Natural killer cell (primary cell): ENCODE measurements at regions of chr2 and their contacts with region 1.

Region 1: GRCh38 chr2:198322294-198322693 is 517.9 kb downstream of the PLCL1 start:
- DNase-seq: peak in 1 of 2 donors; percentile 8
- ATAC-seq: no peak
- H3K4me3 ChIP-seq: no peak overlapping the region
- H3K4me3 Mint-ChIP-seq: no peak overlapping the region
- H3K27ac ChIP-seq: no peak overlapping the region
- H3K27ac Mint-ChIP-seq: no peak overlapping the region
- H3K4me1 ChIP-seq: no peaks in the 10 kb centered on the region
- H3K4me1 Mint-ChIP-seq: peaks cover 8 to 17% of the 10 kb centered on the region in 2 donors
- H3K27me3 ChIP-seq: peaks cover 17% of the 10 kb centered on the region
- H3K27me3 Mint-ChIP-seq: peaks cover 18 to 33% of the 10 kb centered on the region in 2 donors
- CTCF ChIP-seq: no peak

Region 2: DNA sequence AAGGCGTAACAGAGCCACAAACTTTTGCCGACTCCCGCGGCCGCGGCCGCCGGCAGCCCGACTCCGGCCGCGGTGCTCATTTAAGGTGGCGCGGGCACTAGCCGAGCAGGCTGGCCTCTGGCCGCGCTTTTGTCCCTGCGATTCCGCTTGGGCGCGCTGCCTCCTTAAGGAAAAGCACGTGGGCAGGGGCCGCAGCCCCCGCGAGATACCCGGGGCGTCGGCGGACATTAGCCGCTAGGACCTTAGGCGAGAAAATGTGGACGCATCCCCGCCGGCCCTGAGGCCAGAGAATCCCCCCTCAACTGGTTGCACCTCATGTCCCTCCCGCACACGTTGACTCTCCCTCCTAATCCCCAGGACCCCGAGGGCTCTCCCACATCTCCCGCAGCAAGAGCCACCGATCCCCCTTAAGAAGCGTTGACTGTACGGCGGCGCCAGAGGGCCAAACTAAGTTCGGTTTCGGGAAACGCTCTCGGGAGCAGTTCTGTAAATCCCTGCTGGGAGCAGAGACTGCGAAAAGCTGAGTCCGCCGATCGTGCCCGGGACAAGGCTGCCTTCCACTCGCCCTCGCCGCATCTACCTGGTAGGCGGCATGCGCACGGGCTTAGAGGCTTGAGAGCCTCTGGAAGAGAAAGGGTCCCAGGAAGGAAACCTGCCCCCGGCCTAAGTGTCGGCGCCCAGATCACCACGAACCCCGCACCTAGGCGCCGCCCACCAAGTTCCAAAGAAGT is 1137.2 kb after region 1 on chr2:
- intact Hi-C with region 1: loop called (anchors 10 kb)
- DNase-seq: peak; percentile 37 to 75
- ATAC-seq: peak; percentile 28 to 55 (median 39)
- H3K4me3 ChIP-seq: peak overlapping the region; percentile 62
- H3K4me3 Mint-ChIP-seq: peak overlapping the region; percentile 94
- H3K27ac ChIP-seq: no peak overlapping the region
- H3K27ac Mint-ChIP-seq: peak overlapping the region; percentile 27 to 57
- H3K4me1 ChIP-seq: peaks cover 52% of the 10 kb centered on the region
- H3K4me1 Mint-ChIP-seq: peaks cover 7 to 20% of the 10 kb centered on the region in 2 donors
- H3K27me3 ChIP-seq: peaks cover 65% of the 10 kb centered on the region
- H3K27me3 Mint-ChIP-seq: peaks cover 33 to 42% of the 10 kb centered on the region in 2 donors
- CTCF ChIP-seq: no peak